Endothelial cell of umbilical vein (primary cell): ENCODE measurements at regions of chr10 and their contacts with region 1.

Region 1: DNA sequence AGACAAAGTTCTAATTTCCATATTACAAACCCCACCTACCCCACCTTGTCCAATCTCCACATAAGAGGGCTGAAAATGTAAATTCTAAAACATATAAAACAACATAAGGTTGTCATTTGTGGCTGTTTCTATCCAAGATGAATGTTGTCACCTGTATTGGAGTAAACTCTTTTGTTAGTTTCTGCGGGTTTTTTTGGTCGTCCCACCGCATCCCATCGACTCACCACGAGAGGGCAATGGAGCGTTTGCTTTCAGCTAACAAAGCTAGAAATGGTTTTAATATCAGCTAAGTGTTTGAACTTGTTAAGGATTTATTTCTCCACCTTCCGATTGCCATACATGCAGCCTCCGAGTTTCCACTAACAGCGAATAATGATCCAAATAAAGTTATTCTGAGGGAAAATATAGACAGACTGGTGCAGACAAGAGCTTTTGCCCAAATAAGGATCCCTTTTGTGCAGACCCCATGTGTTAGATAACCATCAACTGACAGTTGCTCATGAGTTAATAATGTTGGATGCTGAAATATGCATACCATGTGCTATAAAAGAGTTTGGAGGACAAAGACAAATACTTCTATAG is 137.2 kb downstream of the ARID5B start:
- DNase-seq: peak; percentile 85
- H3K4me3 ChIP-seq: no peak overlapping the region
- H3K27ac ChIP-seq: no peak overlapping the region
- H3K4me1 ChIP-seq: peaks cover 11% of the 10 kb centered on the region
- H3K27me3 ChIP-seq: no peaks in the 10 kb centered on the region
- CTCF ChIP-seq: peak; percentile 78 to 85
- POLR2A ChIP-seq: no peak

Region 2: DNA sequence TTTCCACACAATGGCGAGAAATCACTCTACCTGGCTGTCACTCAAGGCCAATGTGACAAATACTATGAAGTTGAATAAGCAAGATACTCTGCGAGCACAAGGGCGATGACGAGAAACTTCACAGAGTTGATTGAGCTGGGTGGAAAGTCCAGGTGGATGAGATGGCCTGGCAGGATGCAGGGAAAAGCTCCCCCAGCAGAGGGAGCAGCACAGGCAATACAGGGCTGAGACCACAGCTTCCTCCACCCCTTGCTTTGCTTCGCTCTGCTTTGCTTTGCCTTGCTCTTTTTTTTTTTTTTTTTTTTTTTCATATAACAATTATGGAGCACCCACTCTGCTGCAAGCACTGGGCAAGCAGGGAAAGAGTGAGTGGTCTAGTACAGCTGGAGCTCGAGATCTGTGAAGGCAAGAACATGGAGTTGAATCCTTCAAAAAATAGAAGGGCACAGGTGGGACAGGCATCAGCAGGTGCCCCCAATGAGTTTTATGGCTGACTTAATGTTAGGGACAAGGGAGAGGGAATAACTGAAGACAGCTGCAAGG is 287.7 kb before region 1 on chr10:
- CTCF ChIA-PET with region 1: interaction called, 11 read pairs
- POLR2A ChIA-PET with region 1: no interaction called
- dilution Hi-C with region 1: no loop called
- intact Hi-C with region 1: loop called (anchors 5 kb)
- DNase-seq: peak; percentile 58
- H3K4me3 ChIP-seq: no peak overlapping the region
- H3K27ac ChIP-seq: no peak overlapping the region
- H3K4me1 ChIP-seq: peaks cover 18% of the 10 kb centered on the region
- H3K27me3 ChIP-seq: no peaks in the 10 kb centered on the region
- CTCF ChIP-seq: peak; percentile 82 to 86
- POLR2A ChIP-seq: no peak

Region 3: DNA sequence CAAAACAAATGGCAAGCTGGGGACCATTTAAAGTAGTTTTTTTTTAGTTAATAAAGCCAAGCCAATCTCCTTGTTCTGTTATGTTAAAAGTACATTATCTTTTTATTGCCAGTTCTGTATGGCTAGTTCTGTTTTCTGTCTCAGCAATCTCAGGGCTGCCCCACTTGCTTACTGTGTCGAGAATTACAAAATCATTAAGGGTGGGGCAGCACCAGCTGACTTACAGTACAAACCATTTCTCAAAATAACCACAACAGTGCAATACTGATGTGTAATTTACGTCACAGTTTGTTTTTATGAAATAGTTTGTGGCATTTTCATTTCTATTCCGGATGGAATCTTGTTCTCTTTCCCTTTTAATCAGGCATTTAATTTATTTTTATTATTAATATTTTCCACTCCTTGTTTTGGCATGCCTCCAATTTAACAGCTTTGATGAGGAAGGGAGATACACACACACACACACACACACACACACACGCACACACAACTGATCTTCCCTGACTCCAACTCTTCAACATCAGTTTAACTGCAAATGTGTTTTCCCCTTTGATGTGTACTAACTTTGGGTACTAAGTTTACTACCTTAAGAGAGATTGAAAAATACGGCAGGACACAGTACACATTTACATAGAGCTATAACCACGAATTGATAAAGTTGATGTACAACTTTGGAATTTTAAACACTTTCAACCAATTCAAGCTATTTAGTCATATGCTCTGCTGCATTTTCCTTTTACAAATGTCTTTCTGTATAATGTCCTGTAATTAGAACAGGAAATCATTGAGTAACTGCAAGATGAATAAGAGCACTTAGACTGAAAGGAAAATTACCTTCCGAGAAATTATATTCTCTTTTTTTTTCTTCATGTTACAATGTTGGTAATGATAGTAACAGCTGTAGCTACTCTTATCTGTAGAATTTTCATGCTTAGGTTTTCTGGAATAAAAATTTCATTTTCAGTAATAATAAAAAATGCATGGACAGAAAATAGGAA is 45.7 kb before region 1 on chr10:
- CTCF ChIA-PET with region 1: interaction called, 13 read pairs
- POLR2A ChIA-PET with region 1: no interaction called
- dilution Hi-C with region 1: no loop called
- intact Hi-C with region 1: no loop called
- DNase-seq: peak; percentile 78
- H3K4me3 ChIP-seq: peak overlapping the region in 1 of 3 experiments; percentile 46
- H3K27ac ChIP-seq: peak overlapping the region; percentile 50
- H3K4me1 ChIP-seq: peaks cover 23% of the 10 kb centered on the region
- H3K27me3 ChIP-seq: no peaks in the 10 kb centered on the region
- CTCF ChIP-seq: no peak
- POLR2A ChIP-seq: no peak

Region 4: GRCh38 chr10:62050893-62051433 is 12.3 kb after region 1 on chr10:
- CTCF ChIA-PET with region 1: interaction called, 35 read pairs
- POLR2A ChIA-PET with region 1: no interaction called
- dilution Hi-C with region 1: no loop called
- intact Hi-C with region 1: no loop called
- DNase-seq: peak; percentile 88
- H3K4me3 ChIP-seq: peak overlapping the region in 2 of 3 experiments; percentile 36 to 60
- H3K27ac ChIP-seq: peak overlapping the region; percentile 63
- H3K4me1 ChIP-seq: peaks cover 46% of the 10 kb centered on the region
- H3K27me3 ChIP-seq: no peaks in the 10 kb centered on the region
- CTCF ChIP-seq: no peak
- POLR2A ChIP-seq: no peak

Region 5: DNA sequence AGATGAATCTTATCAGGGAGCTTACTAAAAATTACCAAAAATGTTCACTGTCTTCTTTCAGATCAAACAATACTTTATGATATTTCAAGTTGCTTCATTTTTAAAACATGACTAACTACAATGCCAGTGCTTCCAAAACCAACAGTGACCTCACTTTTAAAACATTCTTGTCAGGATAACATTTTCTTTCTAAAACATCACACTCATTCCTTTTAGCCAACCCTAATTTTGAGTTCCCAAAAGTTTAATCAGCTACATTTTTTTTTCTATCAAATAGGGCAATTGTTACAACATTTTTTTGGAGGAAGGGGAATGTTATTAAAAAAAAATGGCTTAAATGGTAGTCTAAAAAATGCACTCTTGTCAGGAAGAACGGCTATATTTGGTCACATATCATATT is 192.7 kb after region 1 on chr10:
- CTCF ChIA-PET with region 1: interaction called, 21 read pairs
- POLR2A ChIA-PET with region 1: no interaction called
- dilution Hi-C with region 1: no loop called
- intact Hi-C with region 1: no loop called
- DNase-seq: peak; percentile 78
- H3K4me3 ChIP-seq: no peak overlapping the region
- H3K27ac ChIP-seq: peak overlapping the region; percentile 76
- H3K4me1 ChIP-seq: peaks cover 21% of the 10 kb centered on the region
- H3K27me3 ChIP-seq: no peaks in the 10 kb centered on the region
- CTCF ChIP-seq: no peak
- POLR2A ChIP-seq: no peak

Region 6: DNA sequence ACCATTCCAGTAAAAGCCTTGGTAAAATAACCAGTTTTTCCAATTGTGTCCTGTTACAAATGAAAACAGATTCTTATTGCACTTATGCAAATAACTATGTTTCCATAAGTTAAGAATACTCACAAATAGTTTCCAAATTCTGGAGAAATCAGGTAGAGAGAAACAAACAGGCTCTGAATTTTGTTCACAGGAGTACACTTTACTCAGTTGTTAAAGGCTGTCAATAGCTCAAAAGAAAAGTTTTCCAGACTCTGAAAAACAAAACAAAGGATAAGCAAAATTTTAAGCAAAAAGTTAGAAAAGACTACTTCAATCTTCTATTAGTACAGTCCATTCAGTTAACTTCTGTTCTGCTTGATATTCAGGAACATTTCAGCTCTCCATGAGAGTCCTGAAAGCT is 302.7 kb after region 1 on chr10:
- CTCF ChIA-PET with region 1: no interaction called
- POLR2A ChIA-PET with region 1: no interaction called
- dilution Hi-C with region 1: no loop called
- intact Hi-C with region 1: no loop called
- DNase-seq: no peak
- H3K4me3 ChIP-seq: no peak overlapping the region
- H3K27ac ChIP-seq: no peak overlapping the region
- H3K4me1 ChIP-seq: no peaks in the 10 kb centered on the region
- H3K27me3 ChIP-seq: no peaks in the 10 kb centered on the region
- CTCF ChIP-seq: no peak
- POLR2A ChIP-seq: no peak

Region 7: DNA sequence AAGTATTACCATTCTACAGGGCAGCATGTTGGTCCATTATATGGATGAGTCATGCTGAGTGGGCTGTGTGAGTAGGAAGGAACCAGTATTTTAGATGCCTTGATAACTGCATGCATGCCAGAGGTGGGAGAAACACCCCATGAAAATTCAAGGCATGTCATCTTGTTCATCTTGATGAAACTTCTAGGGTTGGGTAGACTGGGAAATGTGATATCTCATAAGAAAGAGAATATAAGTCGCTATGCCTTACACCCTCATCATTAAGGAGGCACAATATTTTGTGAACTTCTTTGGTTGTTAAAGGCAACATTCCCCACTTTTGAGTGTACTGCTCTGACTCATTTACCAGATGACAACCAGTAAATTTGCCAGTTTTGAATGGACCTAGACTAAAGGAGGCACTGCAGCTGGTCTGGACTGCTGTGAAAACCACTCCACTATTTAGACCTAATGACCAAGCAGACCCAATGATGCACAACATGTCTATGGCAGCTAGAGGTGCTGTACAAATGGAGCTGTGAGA is 383.4 kb after region 1 on chr10:
- CTCF ChIA-PET with region 1: interaction called, 18 read pairs
- POLR2A ChIA-PET with region 1: no interaction called
- dilution Hi-C with region 1: no loop called
- intact Hi-C with region 1: no loop called
- DNase-seq: no peak
- H3K4me3 ChIP-seq: no peak overlapping the region
- H3K27ac ChIP-seq: no peak overlapping the region
- H3K4me1 ChIP-seq: no peaks in the 10 kb centered on the region
- H3K27me3 ChIP-seq: no peaks in the 10 kb centered on the region
- CTCF ChIP-seq: no peak
- POLR2A ChIP-seq: no peak